Activated T-helper 2 cell treated with anti-CD3 and anti-CD28 coated beads, Interferon-gamma antibody, Interleukin-2, Interleukin-4, amounts not matched to agents 10 μg/mL and 5 μg/mL and 100 μg/mL, durations not matched to agents 14 hours and 24 hours and 36 hours (primary cell): ENCODE measurements at regions of chr14 and their contacts with region 1.

Region 1: GRCh38 chr14:67619446-67620216 is at the start of gene ARG2:
- DNase-seq: peak; percentile 94
- H3K4me3 Mint-ChIP-seq: peak within 1 kb of the TSS; percentile 83
- H3K27ac Mint-ChIP-seq: peak within 1 kb of the TSS; percentile 79
- H3K4me1 Mint-ChIP-seq: peaks cover 38% of the 10 kb centered on the region
- H3K27me3 Mint-ChIP-seq: peaks cover 12% of the 10 kb centered on the region
- total RNA-seq, gene ARG2: 19.2 and 21.1 TPM in 2 replicates

Region 2: DNA sequence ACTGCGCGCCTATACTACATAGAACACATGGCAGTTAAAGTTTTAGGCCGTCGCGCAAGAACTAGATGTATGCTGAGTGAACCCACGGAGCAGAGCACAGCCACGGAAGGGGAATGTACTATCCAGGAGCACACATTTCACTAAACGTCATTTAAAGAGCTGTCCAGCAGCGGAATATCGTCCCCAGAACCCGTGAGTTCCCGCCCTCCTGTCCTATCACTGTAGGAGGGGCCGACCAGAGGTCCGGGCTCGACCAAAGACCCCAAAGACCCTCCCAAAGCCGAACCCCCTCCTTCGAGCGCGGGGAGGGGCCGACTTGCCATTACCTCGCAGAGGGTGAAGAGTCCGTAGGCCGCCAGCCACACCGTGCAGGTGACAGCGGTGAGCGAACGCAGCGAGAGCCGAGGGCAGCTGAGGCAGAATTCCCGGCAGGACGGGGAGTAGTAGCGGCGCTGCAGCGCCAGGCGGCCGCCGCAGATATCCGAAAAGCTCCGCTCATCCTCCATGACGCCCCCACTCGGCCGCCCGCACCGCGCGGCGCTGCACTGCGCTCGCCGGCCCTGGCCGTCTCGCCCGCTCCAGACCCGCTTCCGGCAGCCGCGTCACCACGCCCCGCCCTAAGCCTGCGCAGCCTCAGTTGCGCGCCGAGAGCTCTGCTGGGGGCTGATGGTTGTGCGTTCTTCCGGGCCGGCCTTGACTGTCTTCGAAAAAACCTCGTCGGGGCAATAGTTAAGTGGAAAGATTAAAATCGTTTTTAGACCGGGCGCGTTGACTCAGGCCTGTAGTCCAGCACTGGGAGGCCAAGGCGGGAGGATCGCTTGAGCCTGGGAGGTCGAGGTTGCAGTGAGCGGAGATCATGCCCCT is 19.7 kb before region 1 on chr14 and contains the start of gene PIGH:
- intact Hi-C with region 1: loop called (anchors 1 kb)
- DNase-seq: peak; percentile 92
- H3K4me3 Mint-ChIP-seq: peak within 1 kb of the TSS; percentile 92
- H3K27ac Mint-ChIP-seq: peak within 1 kb of the TSS; percentile 91
- H3K4me1 Mint-ChIP-seq: peaks cover 16% of the 10 kb centered on the region
- H3K27me3 Mint-ChIP-seq: peaks cover 9% of the 10 kb centered on the region
- total RNA-seq, gene PIGH: 14.5 and 21.8 TPM in 2 replicates

Region 3: GRCh38 chr14:67644428-67644827 is 24.8 kb after region 1 on chr14:
- intact Hi-C with region 1: loop called (anchors 2 kb)
- DNase-seq: no peak
- H3K4me3 Mint-ChIP-seq: no peak overlapping the region
- H3K27ac Mint-ChIP-seq: no peak overlapping the region
- H3K4me1 Mint-ChIP-seq: peaks cover 35% of the 10 kb centered on the region
- H3K27me3 Mint-ChIP-seq: no peaks in the 10 kb centered on the region

Region 4: GRCh38 chr14:67666750-67667449 is 47.3 kb after region 1 on chr14:
- intact Hi-C with region 1: loop called (anchors 1 kb)
- DNase-seq: no peak
- H3K4me3 Mint-ChIP-seq: no peak overlapping the region
- H3K27ac Mint-ChIP-seq: peak overlapping the region; percentile 43
- H3K4me1 Mint-ChIP-seq: peaks cover 27% of the 10 kb centered on the region
- H3K27me3 Mint-ChIP-seq: no peaks in the 10 kb centered on the region

Region 5: GRCh38 chr14:67704484-67705089 is 85.0 kb after region 1 on chr14:
- intact Hi-C with region 1: loop called (anchors 1 kb)
- DNase-seq: peak; percentile 18
- H3K4me3 Mint-ChIP-seq: no peak overlapping the region
- H3K27ac Mint-ChIP-seq: no peak overlapping the region
- H3K4me1 Mint-ChIP-seq: peaks cover 2% of the 10 kb centered on the region
- H3K27me3 Mint-ChIP-seq: peaks cover 9% of the 10 kb centered on the region